Endothelial cell of umbilical vein (primary cell): ENCODE measurements at regions of chr2 and their contacts with region 1.

Region 1: DNA sequence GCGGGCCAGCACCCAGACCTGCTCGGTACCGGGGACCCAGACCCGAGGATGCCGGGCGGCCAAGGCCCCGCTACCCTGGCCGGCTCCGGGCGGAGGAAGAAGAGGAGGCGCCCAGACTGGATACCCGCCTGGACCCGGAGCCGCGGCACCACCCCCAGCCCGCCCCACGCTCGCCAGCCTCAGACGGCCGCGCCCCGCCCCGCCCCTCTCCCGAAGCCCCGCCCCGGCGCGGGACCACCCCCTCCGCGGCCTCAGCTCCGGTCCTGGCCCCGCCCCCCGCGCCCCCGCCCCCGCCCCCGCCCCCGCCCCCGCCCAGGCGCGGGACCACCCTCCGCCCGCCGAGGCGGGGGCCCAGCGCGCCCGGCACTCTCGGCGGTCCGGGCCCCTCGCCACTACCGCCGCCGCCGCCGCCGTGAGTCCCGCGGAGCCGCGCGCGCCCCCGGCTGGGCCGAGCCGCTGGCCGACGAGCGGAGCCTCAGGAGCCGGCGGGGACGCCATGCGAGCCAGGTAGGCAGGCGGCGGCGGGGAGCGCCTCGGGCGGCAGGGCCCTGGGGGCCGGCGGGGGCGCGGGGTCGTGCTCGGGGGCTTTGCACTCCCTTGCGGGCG is at the start of gene SH3BP4:
- DNase-seq: peak; percentile 64
- H3K4me3 ChIP-seq: peak within 1 kb of the TSS; percentile 87 to 95 (median 94)
- H3K27ac ChIP-seq: peak within 1 kb of the TSS; percentile 92
- H3K4me1 ChIP-seq: peaks cover 28% of the 10 kb centered on the region
- H3K27me3 ChIP-seq: no peaks in the 10 kb centered on the region
- CTCF ChIP-seq: no peak
- POLR2A ChIP-seq: peak; percentile 60
- total RNA-seq, gene SH3BP4: 100.0 and 105 TPM in 2 replicates

Region 2: DNA sequence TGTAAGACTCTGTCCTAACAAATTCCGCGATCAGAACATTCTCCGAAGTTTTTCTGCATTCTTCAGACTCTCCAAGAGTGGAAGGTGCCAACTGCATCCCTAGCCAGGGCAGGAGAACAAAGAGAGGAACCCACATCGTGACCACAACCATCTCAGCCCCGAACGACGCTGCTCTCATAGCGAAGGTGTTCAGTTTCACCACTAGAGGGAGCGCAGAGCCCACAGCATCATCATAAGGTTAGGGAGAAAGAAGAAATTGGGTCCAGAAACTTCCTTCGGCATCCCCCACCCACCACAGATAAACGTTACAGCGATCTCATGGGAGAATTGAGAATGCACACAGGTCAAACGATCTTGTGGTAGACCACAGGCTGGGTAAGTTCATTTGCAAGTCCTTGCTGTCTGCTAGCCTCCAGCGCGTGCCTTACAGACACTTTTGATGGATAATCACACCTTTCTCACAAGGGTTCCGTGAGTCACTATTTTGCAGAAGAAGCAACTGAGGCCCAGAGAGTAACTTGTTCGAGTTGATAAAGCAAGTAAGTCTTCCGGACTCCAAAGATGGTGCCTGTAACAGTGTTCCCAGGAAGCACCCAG is 401.2 kb before region 1 on chr2:
- CTCF ChIA-PET with region 1: interaction called, 3 read pairs
- POLR2A ChIA-PET with region 1: no interaction called
- dilution Hi-C with region 1: no loop called
- intact Hi-C with region 1: loop called (anchors 1 kb)
- DNase-seq: peak; percentile 76
- H3K4me3 ChIP-seq: no peak overlapping the region
- H3K27ac ChIP-seq: no peak overlapping the region
- H3K4me1 ChIP-seq: no peaks in the 10 kb centered on the region
- H3K27me3 ChIP-seq: peaks cover 0 to 6% of the 10 kb centered on the region in 2 experiments
- CTCF ChIP-seq: peak; percentile 84 to 87
- POLR2A ChIP-seq: no peak

Region 3: GRCh38 chr2:234690569-234691213 is 261.1 kb before region 1 on chr2:
- CTCF ChIA-PET with region 1: no interaction called
- POLR2A ChIA-PET with region 1: interaction called, 3 read pairs
- dilution Hi-C with region 1: no loop called
- intact Hi-C with region 1: loop called (anchors 2 kb)
- DNase-seq: peak; percentile 97
- H3K4me3 ChIP-seq: no peak overlapping the region
- H3K27ac ChIP-seq: peak overlapping the region; percentile 75
- H3K4me1 ChIP-seq: peaks cover 40% of the 10 kb centered on the region
- H3K27me3 ChIP-seq: no peaks in the 10 kb centered on the region
- CTCF ChIP-seq: no peak
- POLR2A ChIP-seq: no peak

Region 4: GRCh38 chr2:234840336-234840735 is 111.4 kb before region 1 on chr2:
- CTCF ChIA-PET with region 1: interaction called, 4 read pairs
- POLR2A ChIA-PET with region 1: no interaction called
- dilution Hi-C with region 1: no loop called
- intact Hi-C with region 1: loop called (anchors 5 kb)
- DNase-seq: peak; percentile 95
- H3K4me3 ChIP-seq: no peak overlapping the region
- H3K27ac ChIP-seq: peak overlapping the region; percentile 62
- H3K4me1 ChIP-seq: peaks cover 19% of the 10 kb centered on the region
- H3K27me3 ChIP-seq: no peaks in the 10 kb centered on the region
- CTCF ChIP-seq: no peak
- POLR2A ChIP-seq: no peak

Region 5: DNA sequence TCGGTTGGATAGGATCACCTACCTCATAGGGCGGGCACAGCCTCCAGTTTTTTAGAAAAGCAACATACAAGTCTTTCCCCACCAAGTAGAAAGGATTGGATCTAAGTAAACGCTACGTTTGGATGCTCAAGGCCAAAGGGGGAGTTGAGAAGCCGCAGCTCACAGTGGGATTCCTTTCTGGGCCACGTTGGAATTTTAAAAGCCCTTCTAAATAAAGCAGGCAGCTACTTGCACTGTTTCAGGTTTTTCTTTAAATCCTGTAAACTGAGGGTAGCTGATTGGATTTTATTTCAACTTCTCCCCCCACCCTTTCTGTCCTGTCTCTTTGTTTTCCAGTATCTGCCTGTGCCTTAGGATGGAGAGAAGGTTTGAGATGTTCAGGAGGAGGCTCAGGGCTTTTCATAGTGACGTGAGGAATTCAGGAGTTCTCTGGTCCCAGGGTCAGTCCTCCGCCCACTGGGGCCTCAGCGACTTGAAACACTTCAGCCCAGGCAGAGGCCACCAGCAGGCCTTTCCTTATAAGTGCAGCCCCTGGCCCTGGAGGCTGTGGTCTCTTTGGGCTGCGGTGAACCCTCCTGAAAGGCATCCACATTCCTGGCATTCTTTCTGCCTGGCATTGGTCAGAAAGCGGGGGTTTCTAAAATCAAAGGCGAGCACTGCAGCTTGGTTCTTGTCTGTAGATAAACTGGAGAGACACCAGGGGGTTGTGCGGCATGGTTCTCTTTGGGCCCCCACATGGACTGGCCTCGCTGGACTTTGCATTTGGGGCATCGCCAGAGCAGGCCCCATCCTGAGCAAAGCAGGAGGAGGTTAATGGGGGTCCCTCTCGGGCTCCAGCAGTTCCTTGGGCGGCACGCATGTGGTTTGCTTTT is 44.5 kb after region 1 on chr2:
- CTCF ChIA-PET with region 1: interaction called, 3 read pairs
- POLR2A ChIA-PET with region 1: no interaction called
- dilution Hi-C with region 1: no loop called
- intact Hi-C with region 1: loop called (anchors 1 kb)
- DNase-seq: peak; percentile 64
- H3K4me3 ChIP-seq: no peak overlapping the region
- H3K27ac ChIP-seq: peak overlapping the region; percentile 88
- H3K4me1 ChIP-seq: peaks cover 56% of the 10 kb centered on the region
- H3K27me3 ChIP-seq: no peaks in the 10 kb centered on the region
- CTCF ChIP-seq: peak; percentile 41 to 53
- POLR2A ChIP-seq: no peak

Region 6: GRCh38 chr2:235050992-235051351 is 99.2 kb after region 1 on chr2:
- CTCF ChIA-PET with region 1: interaction called, 3 read pairs
- POLR2A ChIA-PET with region 1: no interaction called
- dilution Hi-C with region 1: no loop called
- intact Hi-C with region 1: loop called (anchors 2 kb)
- DNase-seq: peak; percentile 88
- H3K4me3 ChIP-seq: no peak overlapping the region
- H3K27ac ChIP-seq: peak overlapping the region; percentile 69
- H3K4me1 ChIP-seq: peaks cover 28% of the 10 kb centered on the region
- H3K27me3 ChIP-seq: no peaks in the 10 kb centered on the region
- CTCF ChIP-seq: peak in 1 of 2 donors; percentile 10
- POLR2A ChIP-seq: no peak

Region 7: GRCh38 chr2:235358981-235359471 is 407.3 kb after region 1 on chr2:
- CTCF ChIA-PET with region 1: no interaction called
- POLR2A ChIA-PET with region 1: no interaction called
- dilution Hi-C with region 1: no loop called
- intact Hi-C with region 1: no loop called
- DNase-seq: no peak
- H3K4me3 ChIP-seq: no peak overlapping the region
- H3K27ac ChIP-seq: no peak overlapping the region
- H3K4me1 ChIP-seq: no peaks in the 10 kb centered on the region
- H3K27me3 ChIP-seq: no peaks in the 10 kb centered on the region
- CTCF ChIP-seq: no peak
- POLR2A ChIP-seq: no peak

Region 8: GRCh38 chr2:236073246-236073645 is 1121.5 kb after region 1 on chr2:
- CTCF ChIA-PET with region 1: no interaction called
- POLR2A ChIA-PET with region 1: no interaction called
- dilution Hi-C with region 1: no loop called
- intact Hi-C with region 1: no loop called
- DNase-seq: no peak
- H3K4me3 ChIP-seq: no peak overlapping the region
- H3K27ac ChIP-seq: no peak overlapping the region
- H3K4me1 ChIP-seq: no peaks in the 10 kb centered on the region
- H3K27me3 ChIP-seq: no peaks in the 10 kb centered on the region
- CTCF ChIP-seq: no peak
- POLR2A ChIP-seq: no peak